Caco-2 (cell line): ENCODE measurements at regions of chr12 and their contacts with region 1.

Region 1: GRCh38 chr12:80837348-80837985 is 100.3 kb downstream of the LIN7A start:
- DNase-seq: peak; percentile 42 to 49
- H3K4me3 ChIP-seq: no peak overlapping the region
- H3K4me3 Mint-ChIP-seq: no peak overlapping the region
- H3K27ac Mint-ChIP-seq: no peak overlapping the region
- H3K4me1 ChIP-seq: peaks cover 21% of the 10 kb centered on the region
- H3K4me1 Mint-ChIP-seq: peaks cover 14% of the 10 kb centered on the region
- H3K27me3 ChIP-seq: no peaks in the 10 kb centered on the region
- H3K27me3 Mint-ChIP-seq: no peaks in the 10 kb centered on the region
- CTCF ChIP-seq: peak; percentile 56 to 79

Region 2: DNA sequence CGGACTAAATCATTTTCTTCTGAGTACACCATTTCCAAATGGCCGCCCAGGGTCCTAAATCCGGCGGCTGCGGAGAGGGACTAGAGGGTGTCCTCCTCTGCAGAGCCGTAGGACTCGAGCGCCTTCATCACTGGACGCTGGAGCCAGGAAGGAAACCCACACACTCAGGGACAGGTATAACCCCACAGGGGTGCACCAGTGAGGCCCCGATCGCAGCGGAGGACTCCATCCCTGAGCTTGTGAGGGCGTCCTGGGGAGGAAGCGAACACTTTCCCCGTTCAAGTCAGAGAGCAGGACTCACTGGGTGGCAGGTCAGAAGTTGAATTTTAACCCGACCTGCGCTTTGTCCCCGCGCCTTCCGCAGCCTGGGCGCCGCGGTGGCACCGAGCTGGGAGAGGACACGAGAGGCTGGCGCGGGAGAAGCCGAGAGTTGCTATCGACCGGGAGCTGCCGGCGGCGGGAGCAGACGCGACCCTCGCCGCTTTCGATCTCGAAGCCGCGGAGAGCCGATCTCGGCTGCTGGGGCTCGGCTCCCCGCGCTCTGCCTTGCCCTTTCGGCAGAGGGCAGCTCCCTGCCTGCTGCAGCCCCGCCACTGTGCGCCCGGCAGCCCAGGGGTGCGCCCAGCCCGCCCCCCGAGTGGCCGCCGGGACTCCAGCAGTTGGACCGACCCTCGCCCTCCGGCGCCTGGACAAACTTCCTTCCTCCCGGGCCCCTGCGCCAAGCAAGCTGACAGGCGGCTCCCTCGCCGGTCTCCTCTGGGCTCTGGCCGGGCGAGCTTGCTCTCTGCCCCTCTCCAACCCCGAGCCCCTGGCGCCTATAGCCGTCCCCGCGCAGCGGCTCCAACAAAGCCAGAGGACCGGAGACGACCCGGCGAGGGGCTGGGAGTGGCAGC is 99.3 kb after region 1 on chr12:
- CTCF ChIA-PET with region 1: no interaction called
- POLR2A ChIA-PET with region 1: no interaction called
- intact Hi-C with region 1: loop called (anchors 5 kb)
- DNase-seq: peak; percentile 42 to 58
- H3K4me3 ChIP-seq: peak overlapping the region; percentile 84
- H3K4me3 Mint-ChIP-seq: peak overlapping the region; percentile 86
- H3K27ac Mint-ChIP-seq: peak overlapping the region; percentile 69
- H3K4me1 ChIP-seq: no peaks in the 10 kb centered on the region
- H3K4me1 Mint-ChIP-seq: peaks cover 7% of the 10 kb centered on the region
- H3K27me3 ChIP-seq: no peaks in the 10 kb centered on the region
- H3K27me3 Mint-ChIP-seq: peaks cover 2% of the 10 kb centered on the region
- CTCF ChIP-seq: peak in 1 of 2 experiments; percentile 3

Region 3: DNA sequence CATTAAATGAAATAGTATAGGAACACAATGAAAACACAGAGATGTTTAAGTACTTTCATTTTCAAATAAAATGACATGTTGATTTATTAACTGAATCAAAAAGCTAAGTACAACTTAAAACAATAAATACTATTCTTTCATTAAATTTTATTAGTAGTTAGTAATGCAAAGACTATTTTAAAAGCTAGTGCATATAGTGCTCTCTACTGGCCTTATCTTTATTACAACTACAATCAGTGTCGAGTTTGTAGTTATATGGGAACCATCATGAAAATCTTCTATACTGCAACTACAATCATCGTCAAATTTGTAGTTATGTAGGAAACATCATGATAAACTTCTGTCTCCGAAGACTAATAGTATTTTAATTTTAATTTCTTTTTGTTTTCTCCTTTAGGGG is 109.1 kb after region 1 on chr12:
- CTCF ChIA-PET with region 1: interaction called, 10 read pairs
- POLR2A ChIA-PET with region 1: no interaction called
- intact Hi-C with region 1: no loop called
- DNase-seq: no peak
- H3K4me3 ChIP-seq: no peak overlapping the region
- H3K4me3 Mint-ChIP-seq: no peak overlapping the region
- H3K27ac Mint-ChIP-seq: no peak overlapping the region
- H3K4me1 ChIP-seq: no peaks in the 10 kb centered on the region
- H3K4me1 Mint-ChIP-seq: peaks cover 6% of the 10 kb centered on the region
- H3K27me3 ChIP-seq: no peaks in the 10 kb centered on the region
- H3K27me3 Mint-ChIP-seq: no peaks in the 10 kb centered on the region
- CTCF ChIP-seq: no peak

Region 4: DNA sequence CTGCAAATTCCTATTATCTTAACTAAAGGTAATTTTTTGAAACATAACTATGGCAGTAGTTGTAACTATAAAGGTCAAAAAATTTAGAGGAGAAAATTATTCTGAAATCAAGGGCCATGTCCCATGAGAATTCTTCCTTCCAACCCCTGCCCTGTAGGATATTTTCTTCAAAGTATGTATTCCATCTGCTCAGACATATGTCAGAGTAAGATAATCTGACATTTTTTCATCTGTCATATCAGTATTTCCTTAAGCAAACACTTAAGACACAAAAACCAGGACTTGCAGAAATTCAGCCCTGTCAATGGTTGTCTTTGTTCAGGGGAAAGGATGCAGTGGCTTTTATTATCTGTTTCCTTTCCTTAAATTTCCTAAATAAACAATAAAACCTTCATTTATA is 276.8 kb after region 1 on chr12:
- CTCF ChIA-PET with region 1: no interaction called
- POLR2A ChIA-PET with region 1: no interaction called
- intact Hi-C with region 1: no loop called
- DNase-seq: no peak
- H3K4me3 ChIP-seq: no peak overlapping the region
- H3K4me3 Mint-ChIP-seq: no peak overlapping the region
- H3K27ac Mint-ChIP-seq: no peak overlapping the region
- H3K4me1 ChIP-seq: no peaks in the 10 kb centered on the region
- H3K4me1 Mint-ChIP-seq: no peaks in the 10 kb centered on the region
- H3K27me3 ChIP-seq: no peaks in the 10 kb centered on the region
- H3K27me3 Mint-ChIP-seq: no peaks in the 10 kb centered on the region
- CTCF ChIP-seq: no peak

Region 5: DNA sequence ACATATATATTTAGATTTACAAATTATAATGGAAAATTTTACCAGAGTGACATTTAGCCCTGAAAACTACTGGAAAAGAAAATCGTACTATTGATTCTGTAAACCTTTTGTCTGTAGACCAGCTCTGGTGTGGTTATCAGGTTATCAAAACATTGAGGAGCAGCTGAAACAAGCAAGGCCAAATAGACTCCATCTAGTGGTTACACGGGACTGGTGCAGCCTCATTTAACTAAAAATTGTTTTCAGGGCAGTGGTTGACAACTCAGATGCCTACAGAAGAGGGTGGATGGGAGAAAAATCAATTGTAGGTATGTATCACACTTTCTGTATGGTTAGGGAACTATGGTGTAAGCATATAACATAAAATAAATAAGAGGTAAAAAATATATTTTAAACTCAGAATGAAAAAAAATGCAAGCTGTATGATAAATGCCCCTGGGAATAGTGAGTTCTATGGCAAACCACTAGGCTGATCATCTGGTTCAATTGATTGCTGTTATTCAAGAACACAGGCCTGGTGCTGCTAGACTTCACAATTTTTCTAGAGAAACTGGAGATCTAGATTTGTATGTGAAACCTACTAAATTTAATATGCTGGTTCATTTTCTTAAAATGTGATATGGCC is 291.6 kb after region 1 on chr12:
- CTCF ChIA-PET with region 1: interaction called, 6 read pairs
- POLR2A ChIA-PET with region 1: no interaction called
- intact Hi-C with region 1: loop called (anchors 2 kb)
- DNase-seq: peak; percentile 48 to 58
- H3K4me3 ChIP-seq: no peak overlapping the region
- H3K4me3 Mint-ChIP-seq: no peak overlapping the region
- H3K27ac Mint-ChIP-seq: no peak overlapping the region
- H3K4me1 ChIP-seq: no peaks in the 10 kb centered on the region
- H3K4me1 Mint-ChIP-seq: no peaks in the 10 kb centered on the region
- H3K27me3 ChIP-seq: no peaks in the 10 kb centered on the region
- H3K27me3 Mint-ChIP-seq: no peaks in the 10 kb centered on the region
- CTCF ChIP-seq: peak; percentile 79 to 87

Region 6: GRCh38 chr12:81136519-81136918 is 299.1 kb after region 1 on chr12:
- CTCF ChIA-PET with region 1: no interaction called
- POLR2A ChIA-PET with region 1: no interaction called
- intact Hi-C with region 1: loop called (anchors 2 kb)
- DNase-seq: peak; percentile 32 to 49
- H3K4me3 ChIP-seq: no peak overlapping the region
- H3K4me3 Mint-ChIP-seq: no peak overlapping the region
- H3K27ac Mint-ChIP-seq: peak overlapping the region; percentile 72
- H3K4me1 ChIP-seq: peaks cover 43% of the 10 kb centered on the region
- H3K4me1 Mint-ChIP-seq: peaks cover 32% of the 10 kb centered on the region
- H3K27me3 ChIP-seq: no peaks in the 10 kb centered on the region
- H3K27me3 Mint-ChIP-seq: no peaks in the 10 kb centered on the region
- CTCF ChIP-seq: no peak